SK-N-SH (cell line): ENCODE measurements at regions of chr1 and their contacts with region 1.

Region 1: GRCh38 chr1:174743654-174744561 is 255.8 kb upstream of the CACYBP start:
- DNase-seq: peak; percentile 31
- H3K4me3 ChIP-seq: no peak overlapping the region; a peak in 1 of 4 replicates
- H3K27ac ChIP-seq: no peak overlapping the region
- H3K4me1 ChIP-seq: peaks cover 0 to 3% of the 10 kb centered on the region in 2 experiments; a peak in 2 of 4 replicates
- H3K27me3 ChIP-seq: no peaks in the 10 kb centered on the region
- CTCF ChIP-seq: peak; percentile 83
- EP300 ChIP-seq: no peak
- RAD21 ChIP-seq: peak; percentile 85

Region 2: DNA sequence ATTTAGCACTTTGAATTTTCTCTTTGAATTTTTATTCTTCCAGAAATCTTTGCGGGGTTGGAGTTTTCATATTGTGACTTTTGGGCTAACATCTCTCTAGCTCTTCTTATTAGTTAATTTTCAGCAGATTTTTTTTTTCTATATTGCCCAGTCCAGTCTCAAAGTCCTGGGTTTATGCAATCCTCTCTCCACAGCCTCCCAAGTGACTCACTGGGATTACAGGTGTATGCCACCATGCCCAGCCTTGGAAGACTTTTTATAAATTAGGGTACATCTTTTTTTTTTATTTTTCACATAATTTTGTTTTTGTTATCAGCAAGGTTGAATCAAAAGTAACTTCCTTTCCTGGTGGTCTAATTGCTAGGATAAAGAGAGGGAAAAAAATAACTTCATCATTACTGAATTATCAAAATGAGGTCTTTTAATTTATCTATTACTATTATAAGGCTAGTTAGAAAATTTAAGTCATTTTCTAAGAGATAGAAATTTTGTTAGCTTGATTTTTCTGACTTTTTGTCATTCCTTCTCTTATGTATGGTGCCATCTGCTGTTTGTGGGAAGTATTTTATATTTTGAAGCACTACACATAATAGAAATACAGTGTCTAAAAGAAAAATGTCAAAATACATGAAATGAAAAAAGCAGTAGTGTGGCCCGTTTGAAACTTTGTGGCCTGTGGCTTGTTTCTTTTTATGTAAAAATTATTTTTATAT is 17.6 kb before region 1 on chr1:
- CTCF ChIA-PET with region 1: interaction called, 28 read pairs
- POLR2A ChIA-PET with region 1: no interaction called
- DNase-seq: no peak
- H3K4me3 ChIP-seq: no peak overlapping the region
- H3K27ac ChIP-seq: no peak overlapping the region
- H3K4me1 ChIP-seq: no peaks in the 10 kb centered on the region; a peak in 1 of 4 replicates
- H3K27me3 ChIP-seq: no peaks in the 10 kb centered on the region
- CTCF ChIP-seq: peak; percentile 75
- EP300 ChIP-seq: no peak
- RAD21 ChIP-seq: peak; percentile 69